ENCODE measurements at regions of chr14 and their contacts with region 1.

Region 1: GRCh38 chr14:39988939-39989338 is 556.7 kb upstream of the FBXO33 start:
- DNase-seq: peak; percentile 78
- ATAC-seq: peak; percentile 93
- H3K4me3 ChIP-seq: no peak overlapping the region
- H3K27ac ChIP-seq: no peak overlapping the region
- H3K4me1 ChIP-seq: no peaks in the 10 kb centered on the region
- H3K27me3 ChIP-seq: no peaks in the 10 kb centered on the region
- CTCF ChIP-seq: peak; percentile 93

Region 2: DNA sequence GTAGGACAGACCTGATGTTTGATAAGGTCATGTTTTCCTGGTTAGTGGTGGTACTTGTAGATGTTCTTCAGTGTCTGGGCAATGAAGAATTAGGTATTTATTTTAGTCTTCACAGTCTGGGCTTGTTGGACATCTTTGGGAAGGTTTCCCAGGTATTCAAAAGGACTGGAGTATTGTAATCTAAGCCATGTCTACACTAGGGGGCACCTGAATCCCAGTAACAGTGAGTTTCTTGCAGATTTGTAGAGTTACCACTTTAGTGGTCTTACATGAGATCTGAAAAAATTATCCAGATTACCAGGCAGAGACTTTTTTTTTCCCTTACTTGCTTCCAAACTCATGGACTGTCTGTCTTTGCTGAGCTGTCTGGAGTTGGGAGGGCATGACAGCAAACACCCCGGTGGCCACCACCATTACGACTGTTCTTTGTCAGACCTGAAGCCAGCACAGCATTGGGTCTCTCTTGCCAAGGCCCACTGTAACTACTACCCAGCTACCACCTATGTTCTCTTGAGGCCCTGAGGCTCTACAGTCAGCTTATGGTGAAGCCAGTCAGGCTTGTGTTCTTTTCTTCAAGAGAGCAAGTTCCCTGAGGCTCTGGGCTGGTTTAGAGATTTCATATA is 264.0 kb after region 1 on chr14:
- CTCF ChIA-PET with region 1: no interaction called
- POLR2A ChIA-PET with region 1: no interaction called
- intact Hi-C with region 1: loop called (anchors 5 kb)
- DNase-seq: peak; percentile 44
- ATAC-seq: peak; percentile 49; the same call in 1 of the 2 replicates
- H3K4me3 ChIP-seq: no peak overlapping the region
- H3K27ac ChIP-seq: no peak overlapping the region
- H3K4me1 ChIP-seq: peaks cover 15% of the 10 kb centered on the region
- H3K27me3 ChIP-seq: no peaks in the 10 kb centered on the region
- CTCF ChIP-seq: peak; percentile 60

Region 3: DNA sequence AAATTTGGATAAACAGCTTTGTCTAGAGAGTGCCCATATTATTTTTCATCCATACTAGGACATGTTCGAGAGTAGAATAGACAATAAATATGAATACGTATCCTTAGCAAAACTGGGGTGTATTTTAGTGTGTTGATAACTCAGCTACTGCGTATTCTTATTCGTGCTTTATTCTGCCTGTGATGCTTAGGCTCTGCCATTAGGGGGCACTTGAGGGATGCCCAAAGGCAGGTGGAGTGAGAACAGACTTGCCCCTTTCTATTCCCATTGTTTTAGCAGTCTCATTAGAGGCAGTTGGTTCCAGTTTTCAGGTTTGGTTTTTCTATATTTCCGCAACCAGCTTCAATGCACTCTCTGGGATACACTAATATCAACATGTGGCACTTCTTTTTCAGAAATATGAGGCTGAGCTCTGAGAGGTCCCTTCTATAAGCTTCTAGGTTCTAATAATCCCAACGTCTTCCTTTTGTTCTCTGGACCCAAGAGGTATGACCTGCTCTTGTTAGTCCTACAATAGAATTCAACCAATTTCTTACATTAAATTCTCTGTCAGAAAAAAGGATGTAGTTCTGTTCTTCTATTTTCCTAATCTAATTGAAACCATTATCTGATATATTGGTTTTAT is 428.9 kb after region 1 on chr14:
- CTCF ChIA-PET with region 1: no interaction called
- POLR2A ChIA-PET with region 1: no interaction called
- intact Hi-C with region 1: loop called (anchors 1 kb)
- DNase-seq: peak; percentile 71
- ATAC-seq: peak; percentile 65
- H3K4me3 ChIP-seq: peak overlapping the region; percentile 33; the same call in 1 of the 2 replicates
- H3K27ac ChIP-seq: no peak overlapping the region
- H3K4me1 ChIP-seq: 0 out of 2 replicates have a peak, but pooled peaks cover 4% of the 10 kb centered on the region
- H3K27me3 ChIP-seq: no peaks in the 10 kb centered on the region
- CTCF ChIP-seq: peak; percentile 88

Region 4: DNA sequence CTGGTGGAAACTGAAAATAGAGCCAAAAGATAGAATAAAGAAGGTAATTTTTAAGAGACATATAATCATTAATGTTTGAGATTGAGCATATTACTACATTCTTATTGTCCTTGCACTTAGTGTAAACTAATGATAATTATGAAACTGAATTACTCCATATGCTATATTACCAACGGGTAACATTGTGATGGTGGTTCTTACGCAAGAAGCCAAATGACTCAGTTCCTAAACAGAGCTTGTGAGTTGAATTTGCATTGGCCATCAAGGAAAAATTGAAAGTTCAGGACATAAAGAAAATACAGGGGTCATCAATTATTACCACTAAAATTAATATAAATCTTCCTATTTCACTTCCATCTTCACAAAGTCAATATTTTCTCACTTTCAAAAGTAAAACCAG is 1285.9 kb after region 1 on chr14:
- CTCF ChIA-PET with region 1: no interaction called
- POLR2A ChIA-PET with region 1: no interaction called
- intact Hi-C with region 1: loop called (anchors 10 kb)
- DNase-seq: no peak
- ATAC-seq: no peak
- H3K4me3 ChIP-seq: no peak overlapping the region
- H3K27ac ChIP-seq: no peak overlapping the region
- H3K4me1 ChIP-seq: no peaks in the 10 kb centered on the region
- H3K27me3 ChIP-seq: no peaks in the 10 kb centered on the region
- CTCF ChIP-seq: no peak

Region 5: GRCh38 chr14:41586237-41586636 is 1597.3 kb after region 1 on chr14:
- CTCF ChIA-PET with region 1: no interaction called
- POLR2A ChIA-PET with region 1: no interaction called
- intact Hi-C with region 1: loop called (anchors 5 kb)
- DNase-seq: peak; percentile 18
- ATAC-seq: peak; percentile 63
- H3K4me3 ChIP-seq: no peak overlapping the region
- H3K27ac ChIP-seq: no peak overlapping the region
- H3K4me1 ChIP-seq: no peaks in the 10 kb centered on the region
- H3K27me3 ChIP-seq: no peaks in the 10 kb centered on the region
- CTCF ChIP-seq: peak; percentile 47; the same call in 1 of the 2 replicates

Measured in PC-3 (cell line).